GM12878 (cell line): ENCODE measurements at regions of chr14 and their contacts with region 1.

Region 1: DNA sequence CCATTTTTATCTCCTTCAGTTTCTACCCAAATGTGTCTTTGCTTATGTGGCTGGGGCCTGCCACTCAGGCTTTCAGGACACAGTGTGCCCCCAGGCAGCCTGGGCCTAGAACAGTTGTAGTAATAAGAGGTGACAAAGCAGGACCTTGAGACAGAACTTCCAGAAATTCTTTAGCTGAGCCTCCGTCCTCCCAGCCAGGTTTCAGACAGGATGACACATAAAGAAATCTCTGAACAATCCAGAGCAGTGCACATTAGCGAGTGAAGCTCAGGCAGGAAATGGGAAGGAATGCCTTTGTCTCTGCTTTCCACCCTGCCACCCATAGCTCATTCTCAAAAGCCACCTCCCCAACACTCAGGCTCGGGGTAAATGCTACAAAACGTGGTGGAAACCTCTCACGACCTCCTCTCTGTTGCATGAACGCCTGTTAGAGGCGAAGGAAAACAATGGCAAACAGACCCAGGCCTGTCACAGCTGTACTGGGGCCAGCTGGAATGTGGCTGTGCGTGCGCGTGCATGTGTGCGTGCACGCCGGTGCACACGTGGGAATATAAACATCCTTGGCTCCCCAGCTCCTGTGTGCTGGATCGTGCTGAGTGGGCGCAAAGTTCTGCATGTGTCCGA is 286.7 kb downstream of the ZFP36L1 start:
- DNase-seq: no peak
- ATAC-seq: peak; percentile 32
- H3K4me3 ChIP-seq: peak overlapping the region; percentile 21
- H3K27ac ChIP-seq: peak overlapping the region; percentile 76
- H3K4me1 ChIP-seq: peaks cover 31% of the 10 kb centered on the region
- H3K27me3 ChIP-seq: no peaks in the 10 kb centered on the region
- CTCF ChIP-seq: no peak
- EP300 ChIP-seq: no peak
- POLR2A ChIP-seq: no peak
- RAD21 ChIP-seq: no peak

Region 2: GRCh38 chr14:68458840-68459469 is 47.2 kb before region 1 on chr14:
- CTCF ChIA-PET with region 1: no interaction called
- POLR2A ChIA-PET with region 1: interaction called, 3 read pairs
- RAD21 ChIA-PET with region 1: interaction called, 3 read pairs
- SMC1A ChIA-PET with region 1: interaction called, 10 read pairs
- in situ Hi-C with region 1: no loop called
- intact Hi-C with region 1: no loop called
- DNase-seq: no peak
- ATAC-seq: no peak
- H3K4me3 ChIP-seq: no peak overlapping the region
- H3K27ac ChIP-seq: no peak overlapping the region
- H3K4me1 ChIP-seq: no peaks in the 10 kb centered on the region
- H3K27me3 ChIP-seq: no peaks in the 10 kb centered on the region
- CTCF ChIP-seq: no peak
- EP300 ChIP-seq: no peak
- POLR2A ChIP-seq: no peak
- RAD21 ChIP-seq: no peak

Region 3: GRCh38 chr14:68476212-68476907 is 29.8 kb before region 1 on chr14:
- CTCF ChIA-PET with region 1: interaction called, 16 read pairs
- POLR2A ChIA-PET with region 1: interaction called, 10 read pairs
- RAD21 ChIA-PET with region 1: interaction called, 30 read pairs
- SMC1A ChIA-PET with region 1: interaction called, 24 read pairs
- in situ Hi-C with region 1: no loop called
- intact Hi-C with region 1: no loop called
- DNase-seq: peak; percentile 93
- ATAC-seq: peak; percentile 96
- H3K4me3 ChIP-seq: no peak overlapping the region
- H3K27ac ChIP-seq: peak overlapping the region; percentile 88
- H3K4me1 ChIP-seq: peaks cover 27% of the 10 kb centered on the region
- H3K27me3 ChIP-seq: no peaks in the 10 kb centered on the region
- CTCF ChIP-seq: no peak
- EP300 ChIP-seq: peak; percentile 70 to 97; a peak in 3 of 4 replicates
- POLR2A ChIP-seq: no peak; the same call in 1 of the 2 replicates
- RAD21 ChIP-seq: peak; percentile 30; the same call in 1 of the 2 replicates

Region 4: DNA sequence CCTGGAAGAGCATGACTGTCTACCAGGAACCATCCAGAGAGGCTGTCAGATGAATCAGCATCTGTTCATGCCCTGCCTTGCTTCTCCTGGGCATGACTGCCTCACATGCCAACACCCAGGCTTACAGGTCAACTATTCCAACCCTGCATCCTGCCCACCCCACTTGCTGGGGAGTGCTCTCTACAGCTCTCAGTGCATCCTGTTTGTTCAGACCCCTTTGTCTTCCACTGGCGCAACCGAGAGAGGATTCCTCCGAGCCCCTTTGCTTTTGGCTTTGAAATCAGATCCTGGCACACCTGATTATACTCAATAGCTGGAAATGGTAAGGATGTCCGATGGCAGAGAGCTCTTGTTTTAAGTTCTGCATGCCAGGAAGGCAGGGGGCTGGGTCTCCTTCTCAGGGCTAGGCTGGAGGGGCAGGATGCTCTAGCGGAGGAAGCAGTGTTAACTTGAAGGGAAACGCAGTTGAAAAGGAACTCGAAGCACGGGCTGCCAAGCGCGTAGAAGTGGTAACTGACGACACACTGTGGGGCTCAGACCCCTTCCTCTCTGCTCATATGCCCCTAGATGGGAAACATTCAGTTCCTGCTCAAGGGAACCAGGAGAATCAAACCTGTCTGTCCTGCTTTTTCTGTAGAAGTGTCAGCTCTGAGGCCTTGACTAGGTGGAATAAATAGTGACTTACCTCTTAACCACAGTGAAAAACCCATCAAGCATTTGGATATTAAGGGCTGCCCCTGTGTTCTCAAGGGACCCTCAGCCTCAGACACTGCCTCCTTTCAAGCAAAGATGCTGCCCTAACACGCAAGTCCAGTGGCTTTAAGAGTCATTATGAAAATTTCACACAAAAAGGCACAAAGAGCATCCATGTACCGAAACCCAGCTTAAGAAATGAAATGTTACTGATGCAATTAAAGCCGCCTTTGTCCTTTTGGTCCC is 10.8 kb before region 1 on chr14:
- CTCF ChIA-PET with region 1: interaction called, 33 read pairs
- POLR2A ChIA-PET with region 1: interaction called, 6 read pairs
- RAD21 ChIA-PET with region 1: interaction called, 13 read pairs
- SMC1A ChIA-PET with region 1: interaction called, 56 read pairs
- in situ Hi-C with region 1: no loop called
- intact Hi-C with region 1: no loop called
- DNase-seq: peak; percentile 83
- ATAC-seq: peak; percentile 92
- H3K4me3 ChIP-seq: no peak overlapping the region
- H3K27ac ChIP-seq: peak overlapping the region; percentile 68
- H3K4me1 ChIP-seq: peaks cover 24% of the 10 kb centered on the region
- H3K27me3 ChIP-seq: no peaks in the 10 kb centered on the region
- CTCF ChIP-seq: no peak
- EP300 ChIP-seq: peak; percentile 71 to 87; a peak in 2 of 4 replicates
- POLR2A ChIP-seq: no peak
- RAD21 ChIP-seq: 0 out of 2 replicates have a peak, but pooled peaks have one; percentile 8

Region 5: DNA sequence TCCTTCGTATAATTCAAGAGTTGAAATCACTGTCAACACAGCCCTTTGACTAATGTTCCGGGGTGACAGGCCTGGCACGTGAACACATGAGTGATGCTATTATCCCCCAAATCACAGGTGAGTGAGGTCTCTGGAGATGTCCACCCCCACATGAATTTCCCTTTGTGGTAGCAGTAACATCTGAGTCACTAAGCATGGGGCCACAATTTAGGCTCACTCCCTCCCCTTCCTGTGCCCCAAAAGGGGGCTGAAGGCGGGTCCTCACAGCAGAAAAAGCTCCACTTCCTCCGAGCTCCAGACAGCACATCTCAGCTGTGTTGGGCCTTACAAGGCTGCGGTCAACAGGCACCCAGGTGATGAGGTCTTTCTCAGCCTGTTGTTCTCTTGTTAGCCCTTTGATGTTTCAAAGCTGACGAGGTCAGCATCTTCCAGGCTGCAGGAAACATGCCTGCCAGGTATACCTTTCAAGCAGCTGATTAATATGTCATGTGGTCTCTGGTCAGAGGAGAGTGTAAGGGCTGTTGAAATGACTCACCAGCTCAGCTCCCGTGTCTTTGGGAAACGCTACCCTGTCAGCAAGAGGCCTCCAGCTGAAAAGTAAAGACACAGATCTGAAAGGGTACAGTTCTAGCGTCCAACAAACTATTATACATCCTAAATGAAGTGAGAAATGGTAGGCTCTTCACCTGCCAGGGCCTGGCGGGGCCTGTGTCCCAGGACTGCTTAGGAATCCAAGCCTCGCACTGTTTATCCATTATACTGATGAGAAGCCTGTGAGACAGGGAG is 179.5 kb after region 1 on chr14:
- CTCF ChIA-PET with region 1: no interaction called
- POLR2A ChIA-PET with region 1: no interaction called
- RAD21 ChIA-PET with region 1: interaction called, 19 read pairs
- SMC1A ChIA-PET with region 1: interaction called, 12 read pairs
- in situ Hi-C with region 1: no loop called
- intact Hi-C with region 1: loop called (anchors 10 kb)
- DNase-seq: peak; percentile 89
- ATAC-seq: peak; percentile 90
- H3K4me3 ChIP-seq: no peak overlapping the region
- H3K27ac ChIP-seq: peak overlapping the region; percentile 67
- H3K4me1 ChIP-seq: peaks cover 48% of the 10 kb centered on the region
- H3K27me3 ChIP-seq: no peaks in the 10 kb centered on the region
- CTCF ChIP-seq: no peak
- EP300 ChIP-seq: peak in 1 of 2 experiments; percentile 85; a peak in 3 of 4 replicates
- POLR2A ChIP-seq: peak; percentile 62
- RAD21 ChIP-seq: 0 out of 2 replicates have a peak, but pooled peaks have one; percentile 0

Region 6: DNA sequence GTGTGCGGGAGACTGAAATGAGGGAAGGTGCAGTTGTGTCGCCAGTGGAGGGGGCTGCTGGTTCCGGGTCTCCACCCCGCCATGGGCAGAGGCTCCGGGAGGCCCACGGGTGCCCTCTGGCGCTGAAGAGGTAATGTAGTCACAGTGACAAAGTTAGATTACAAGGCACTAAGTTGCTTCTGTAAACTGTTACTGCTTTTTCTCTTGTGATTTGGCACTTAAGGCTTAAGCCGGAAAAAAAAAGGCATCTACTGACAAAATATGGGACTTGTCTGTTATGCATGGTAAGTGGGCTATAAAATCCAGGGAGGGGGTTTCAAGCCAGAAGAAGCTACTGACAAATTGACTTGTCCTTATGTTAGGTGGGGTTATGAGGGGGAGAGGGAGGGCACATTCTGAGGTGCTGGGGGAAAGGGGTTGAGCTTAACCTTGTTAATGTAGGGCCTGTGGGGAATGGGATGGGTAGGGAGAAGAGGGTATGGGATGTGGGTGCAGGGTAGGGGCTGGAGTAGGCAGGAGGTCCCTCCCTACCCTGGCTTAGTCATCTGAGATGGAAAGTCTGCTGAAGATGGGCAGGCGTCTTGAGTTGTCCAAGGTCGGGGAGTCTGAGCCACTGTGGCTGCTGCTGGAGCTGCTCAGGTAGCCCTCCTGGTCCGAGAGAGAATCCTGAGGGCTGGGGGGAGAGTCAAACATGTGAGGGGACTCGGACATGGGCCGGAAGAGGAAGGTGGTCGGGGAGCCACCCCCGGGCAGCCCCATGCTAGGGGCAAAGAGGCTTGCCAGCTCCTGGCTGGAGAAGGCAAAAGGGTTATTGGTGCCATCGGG is 283.1 kb after region 1 on chr14:
- CTCF ChIA-PET with region 1: interaction called, 5 read pairs
- POLR2A ChIA-PET with region 1: interaction called, 6 read pairs
- RAD21 ChIA-PET with region 1: interaction called, 19 read pairs
- SMC1A ChIA-PET with region 1: interaction called, 46 read pairs
- in situ Hi-C with region 1: no loop called
- intact Hi-C with region 1: no loop called
- DNase-seq: no peak
- ATAC-seq: peak; percentile 39
- H3K4me3 ChIP-seq: peak overlapping the region; percentile 97
- H3K27ac ChIP-seq: peak overlapping the region; percentile 100
- H3K4me1 ChIP-seq: peaks cover 32% of the 10 kb centered on the region
- H3K27me3 ChIP-seq: no peaks in the 10 kb centered on the region
- CTCF ChIP-seq: peak; percentile 76 to 93 (median 85); a peak in 5 of 6 replicates
- EP300 ChIP-seq: no peak
- POLR2A ChIP-seq: peak; percentile 77
- RAD21 ChIP-seq: peak; percentile 80